Naive thymus-derived CD4-positive, alpha-beta T cell (primary cell): ENCODE measurements at regions of chr18 and their contacts with region 1.

Region 1: DNA sequence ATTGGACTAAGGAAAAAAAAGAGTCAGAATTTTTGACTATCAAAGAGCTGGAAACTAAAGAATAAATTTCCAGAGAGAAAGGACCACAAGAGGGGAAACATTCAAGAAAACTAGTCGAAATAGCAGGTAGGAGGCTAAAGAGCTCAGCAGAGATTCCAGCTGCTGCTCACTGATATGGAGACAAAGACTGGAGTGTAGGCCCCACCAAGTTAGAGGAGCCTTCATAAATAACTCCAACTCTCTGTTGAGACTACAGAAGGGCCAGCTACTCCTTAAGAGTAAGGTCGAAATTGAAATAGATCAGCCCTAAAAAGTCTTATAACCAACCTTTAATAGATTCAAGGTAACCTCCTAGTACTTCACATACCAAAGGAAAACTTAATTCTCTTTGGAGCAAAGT is 31.1 kb downstream of the SS18 start:
- DNase-seq: no peak
- ATAC-seq: no peak
- H3K4me3 ChIP-seq: no peak overlapping the region
- H3K4me3 Mint-ChIP-seq: no peak overlapping the region
- H3K27ac ChIP-seq: no peak overlapping the region
- H3K27ac Mint-ChIP-seq: peak overlapping the region in 2 of 9 donors; percentile 73 to 82
- H3K4me1 ChIP-seq: no peaks in the 10 kb centered on the region
- H3K4me1 Mint-ChIP-seq: peaks cover 10 to 34% (median 19%) of the 10 kb centered on the region in 7 donors
- H3K27me3 ChIP-seq: no peaks in the 10 kb centered on the region
- H3K27me3 Mint-ChIP-seq: no peaks in the 10 kb centered on the region

Region 2: GRCh38 chr18:26082475-26082874 is 23.1 kb after region 1 on chr18:
- CTCF ChIA-PET with region 1: no interaction called
- POLR2A ChIA-PET with region 1: no interaction called
- intact Hi-C with region 1: loop called (anchors 2 to 5 kb)
- DNase-seq: no peak
- ATAC-seq: no peak
- H3K4me3 ChIP-seq: no peak overlapping the region
- H3K4me3 Mint-ChIP-seq: no peak overlapping the region
- H3K27ac ChIP-seq: no peak overlapping the region
- H3K27ac Mint-ChIP-seq: no peak overlapping the region
- H3K4me1 ChIP-seq: no peaks in the 10 kb centered on the region
- H3K4me1 Mint-ChIP-seq: peaks cover 12 to 67% (median 55%) of the 10 kb centered on the region in 7 donors
- H3K27me3 ChIP-seq: no peaks in the 10 kb centered on the region
- H3K27me3 Mint-ChIP-seq: no peaks in the 10 kb centered on the region

Region 3: GRCh38 chr18:26133652-26134051 is 74.3 kb after region 1 on chr18 and contains the start of gene PSMA8:
- CTCF ChIA-PET with region 1: no interaction called
- POLR2A ChIA-PET with region 1: no interaction called
- intact Hi-C with region 1: no loop called
- DNase-seq: peak; percentile 27 to 68 (median 52)
- ATAC-seq: peak; percentile 85
- H3K4me3 ChIP-seq: peak within 1 kb of the TSS; percentile 38
- H3K4me3 Mint-ChIP-seq: peak within 1 kb of the TSS; percentile 56 to 88 (median 81)
- H3K27ac ChIP-seq: peak within 1 kb of the TSS; percentile 75
- H3K27ac Mint-ChIP-seq: peak within 1 kb of the TSS; percentile 72 to 94 (median 85)
- H3K4me1 ChIP-seq: no peaks in the 10 kb centered on the region
- H3K4me1 Mint-ChIP-seq: peaks cover 0 to 13% (median 5%) of the 10 kb centered on the region in 7 donors
- H3K27me3 ChIP-seq: no peaks in the 10 kb centered on the region
- H3K27me3 Mint-ChIP-seq: no peaks in the 10 kb centered on the region
- total RNA-seq, gene PSMA8: 0.19 to 0.89 (median 0.59) TPM